Dendritic cell treated with granulocyte-macrophage colony-stimulating factor and Interleukin-4, amounts not matched to agents 40 ng/mL and 50 ng/mL, for 4 days (primary cell): ENCODE measurements at regions of chr12 and their contacts with region 1.

Region 1: DNA sequence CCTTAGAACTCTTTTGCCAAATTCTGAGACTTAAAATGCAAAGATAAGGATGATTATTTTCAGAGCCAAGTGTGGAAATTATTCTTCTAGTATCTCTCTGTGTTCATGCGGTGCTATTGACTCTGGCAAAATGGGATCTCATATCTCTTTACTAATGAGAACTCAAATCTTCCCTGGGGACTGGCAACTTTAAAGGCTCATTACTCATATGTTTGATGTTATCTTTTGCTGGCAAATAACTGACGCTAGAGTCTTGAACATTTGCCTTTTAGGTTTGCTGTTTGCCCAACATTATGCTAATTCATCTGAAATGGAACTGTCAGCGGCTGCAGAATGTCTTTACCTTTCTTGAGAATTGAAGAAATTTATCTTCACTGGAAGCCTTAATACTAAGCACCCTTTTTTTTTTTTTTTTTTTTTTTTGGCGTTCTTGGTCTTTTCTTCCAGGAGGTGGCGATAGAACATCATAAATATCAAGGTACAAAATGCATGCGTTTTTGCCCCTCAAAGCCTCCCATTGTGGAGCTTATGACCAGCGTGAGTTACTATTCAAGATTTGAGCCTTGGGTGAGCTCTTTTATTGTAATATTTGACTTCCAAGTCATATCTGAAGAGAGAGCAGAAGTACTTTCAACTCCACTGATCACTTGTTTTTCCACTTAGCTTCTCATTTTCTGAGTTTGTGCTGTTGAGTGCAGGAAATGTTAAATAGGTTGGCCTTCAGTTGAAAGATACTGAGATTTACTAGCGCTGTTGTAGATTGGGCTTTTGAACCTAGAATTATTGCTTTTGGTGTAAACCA is 86.6 kb downstream of the CAND1 start:
- H3K4me3 Mint-ChIP-seq: no peak overlapping the region
- H3K27ac Mint-ChIP-seq: no peak overlapping the region
- H3K4me1 Mint-ChIP-seq: peaks cover 7% of the 10 kb centered on the region
- H3K27me3 Mint-ChIP-seq: peaks cover 1% of the 10 kb centered on the region

Region 2: DNA sequence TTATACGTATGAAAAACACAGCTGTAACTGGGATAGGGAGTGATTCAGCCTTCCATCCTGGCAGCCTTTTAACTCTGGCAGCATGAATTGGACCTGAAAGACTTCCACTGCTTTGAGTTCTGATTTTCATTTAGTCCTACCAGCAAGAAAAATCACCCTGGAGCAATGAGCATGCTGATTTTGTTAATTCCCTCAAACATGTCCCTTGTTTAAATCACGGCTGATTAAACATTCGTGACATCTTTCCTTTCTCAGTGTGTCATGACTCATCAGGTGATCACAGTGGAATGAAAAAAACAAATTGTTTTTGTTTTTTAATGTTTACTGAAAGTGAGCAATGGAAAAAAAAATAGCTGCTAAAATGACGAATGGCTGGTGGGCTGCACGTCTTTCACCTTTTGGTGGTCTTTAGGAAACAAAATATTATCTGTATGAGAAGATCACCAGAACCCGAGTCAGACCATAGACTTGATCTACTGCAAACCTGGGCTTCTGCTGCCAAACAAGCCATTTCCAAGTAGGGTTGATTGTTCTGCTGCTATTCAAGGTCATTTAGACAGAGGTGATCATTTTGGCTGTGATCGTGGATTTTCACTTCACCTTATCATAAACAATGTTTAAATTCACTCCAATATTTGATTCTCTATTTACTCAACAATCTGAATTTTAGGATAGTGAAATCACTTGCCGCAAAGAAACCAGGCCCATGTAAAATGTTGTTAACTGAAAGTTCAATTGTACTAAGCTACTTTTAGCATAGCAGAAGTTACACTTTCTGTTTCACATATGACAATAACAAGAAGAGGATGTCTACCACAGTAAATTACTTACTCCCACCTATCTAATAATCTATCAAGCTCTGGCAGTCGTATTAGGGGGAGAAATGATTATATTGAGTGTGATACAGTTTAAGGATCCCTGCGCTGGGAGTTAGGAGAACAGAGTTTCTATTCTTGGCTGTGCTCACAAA is 153.5 kb before region 1 on chr12:
- intact Hi-C with region 1: no loop called
- H3K4me3 Mint-ChIP-seq: no peak overlapping the region
- H3K27ac Mint-ChIP-seq: no peak overlapping the region
- H3K4me1 Mint-ChIP-seq: no peaks in the 10 kb centered on the region
- H3K27me3 Mint-ChIP-seq: no peaks in the 10 kb centered on the region

Region 3: GRCh38 chr12:67220065-67220464 is 135.7 kb before region 1 on chr12:
- intact Hi-C with region 1: no loop called
- H3K4me3 Mint-ChIP-seq: no peak overlapping the region
- H3K27ac Mint-ChIP-seq: no peak overlapping the region
- H3K4me1 Mint-ChIP-seq: no peaks in the 10 kb centered on the region
- H3K27me3 Mint-ChIP-seq: peaks cover 10% of the 10 kb centered on the region

Region 4: DNA sequence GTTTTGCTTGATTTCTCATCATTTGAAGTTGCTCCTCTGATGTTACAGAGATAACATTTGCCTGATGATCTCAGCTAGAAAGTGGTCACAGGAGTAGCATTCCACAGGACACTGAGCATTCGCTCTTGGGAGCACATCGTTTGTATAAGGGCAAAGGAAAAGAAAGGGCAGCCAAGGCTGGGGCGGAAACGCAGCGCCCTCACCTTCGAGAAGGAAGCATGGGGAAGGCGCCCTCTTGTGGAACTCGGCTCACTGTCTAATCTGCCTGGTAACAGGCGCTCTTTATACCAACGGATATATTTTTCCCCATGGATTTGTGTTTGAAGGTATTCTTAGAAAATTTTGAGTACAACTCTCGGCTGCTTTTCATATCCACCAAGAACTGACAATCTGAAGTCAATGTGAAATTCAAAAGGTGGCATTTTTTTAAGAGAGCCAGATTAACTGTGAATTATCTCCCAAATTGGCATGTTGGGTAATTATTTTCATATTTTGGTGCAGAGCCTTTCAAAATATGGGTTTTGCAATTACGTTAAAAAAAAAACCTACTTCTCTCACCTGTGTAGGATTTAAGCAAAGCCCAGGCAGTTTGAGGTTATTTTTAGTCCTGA is 86.1 kb after region 1 on chr12:
- intact Hi-C with region 1: no loop called
- H3K4me3 Mint-ChIP-seq: no peak overlapping the region
- H3K27ac Mint-ChIP-seq: no peak overlapping the region
- H3K4me1 Mint-ChIP-seq: peaks cover 13% of the 10 kb centered on the region
- H3K27me3 Mint-ChIP-seq: peaks cover 71% of the 10 kb centered on the region

Region 5: DNA sequence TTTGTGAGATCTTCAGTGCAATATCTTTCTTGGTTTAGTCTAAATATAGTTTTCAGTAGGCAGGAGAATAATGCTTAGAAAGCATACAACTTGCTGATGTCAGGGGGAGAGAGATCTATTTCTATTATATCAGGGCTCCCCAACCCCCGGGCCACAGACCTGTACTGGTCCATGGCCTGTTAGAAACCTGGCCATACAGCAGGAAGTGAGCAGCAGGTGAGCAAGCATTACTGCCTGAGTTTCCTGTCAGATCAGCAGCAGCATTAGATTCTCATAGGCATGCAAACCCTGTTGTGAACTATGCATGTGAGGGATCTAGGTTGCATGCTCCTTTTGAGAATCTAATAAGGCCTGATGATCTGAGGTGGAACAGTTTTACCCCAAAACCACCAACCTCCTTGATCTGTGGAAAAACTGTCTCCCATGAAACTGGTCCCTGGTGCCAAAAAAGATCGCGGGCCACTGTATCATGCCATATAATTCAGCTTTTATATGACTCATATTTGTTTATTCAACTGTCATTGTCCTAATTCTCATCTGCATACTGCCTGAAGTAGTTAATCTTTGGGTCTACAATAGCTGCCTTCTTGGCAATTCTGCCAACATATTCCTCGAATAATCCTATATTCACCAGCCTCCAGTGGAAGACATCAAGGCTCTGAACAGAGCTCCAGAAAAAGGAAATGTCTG is 129.2 kb after region 1 on chr12:
- intact Hi-C with region 1: no loop called
- H3K4me3 Mint-ChIP-seq: no peak overlapping the region
- H3K27ac Mint-ChIP-seq: no peak overlapping the region
- H3K4me1 Mint-ChIP-seq: peaks cover 20% of the 10 kb centered on the region
- H3K27me3 Mint-ChIP-seq: peaks cover 18% of the 10 kb centered on the region

Region 6: GRCh38 chr12:68031881-68032739 is 676.3 kb after region 1 on chr12:
- intact Hi-C with region 1: loop called (anchors 10 kb)
- H3K4me3 Mint-ChIP-seq: no peak overlapping the region
- H3K27ac Mint-ChIP-seq: no peak overlapping the region
- H3K4me1 Mint-ChIP-seq: no peaks in the 10 kb centered on the region
- H3K27me3 Mint-ChIP-seq: no peaks in the 10 kb centered on the region